ENCODE measurements at regions of chr6 and their contacts with region 1.

Region 1: DNA sequence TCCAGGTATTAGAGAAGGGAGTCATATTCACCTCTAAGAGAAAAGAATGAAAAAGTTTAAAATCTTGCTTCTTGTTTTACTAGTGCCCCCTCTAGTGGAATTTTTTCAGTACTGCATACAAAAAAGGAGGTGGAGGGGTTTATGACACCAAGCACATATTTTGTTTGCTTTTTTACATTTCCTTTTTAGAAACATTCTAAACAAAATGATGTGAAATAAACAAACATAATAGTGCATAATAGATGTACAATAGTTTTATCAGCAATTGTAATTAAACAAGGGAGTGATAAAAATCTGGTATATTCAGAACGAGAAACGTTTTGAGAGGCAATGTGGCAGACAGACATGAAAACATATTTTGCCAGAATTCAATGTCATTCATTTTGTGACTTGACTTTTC is 111.0 kb upstream of the TFAP2D start:
- DNase-seq: peak; percentile 13
- ATAC-seq: no peak
- H3K4me3 ChIP-seq: no peak overlapping the region
- H3K27ac ChIP-seq: no peak overlapping the region
- H3K4me1 ChIP-seq: no peaks in the 10 kb centered on the region
- H3K27me3 ChIP-seq: no peaks in the 10 kb centered on the region
- CTCF ChIP-seq: peak; percentile 76; the same call in 1 of the 2 replicates

Region 2: DNA sequence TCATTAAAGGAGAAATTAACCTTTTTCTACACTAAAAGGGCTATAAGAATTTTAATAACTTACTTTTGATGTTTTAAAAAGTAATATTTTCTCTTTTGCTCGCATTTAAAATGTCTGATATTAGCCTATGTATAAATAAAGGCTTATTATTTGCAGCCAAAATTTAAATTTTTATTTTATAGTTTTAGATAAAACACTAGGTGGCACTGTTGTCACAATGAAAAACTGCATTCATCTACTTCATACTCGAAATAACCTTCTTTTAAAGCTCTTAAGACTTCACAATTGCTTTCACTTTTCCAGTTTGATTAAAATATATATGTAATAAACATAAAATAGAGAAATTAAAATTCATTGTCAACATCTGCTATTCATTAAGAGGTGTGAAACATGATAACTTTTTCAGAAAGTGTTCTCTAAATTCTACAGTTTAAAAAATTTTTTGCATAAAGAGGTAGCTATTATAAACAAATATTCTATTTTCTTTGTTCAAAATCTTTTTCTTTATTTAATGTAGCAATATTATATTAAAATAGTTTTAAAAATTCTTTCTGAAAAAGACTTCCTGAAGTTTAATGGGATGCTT is 473.8 kb before region 1 on chr6:
- CTCF ChIA-PET with region 1: no interaction called
- POLR2A ChIA-PET with region 1: no interaction called
- in situ Hi-C with region 1: no loop called
- intact Hi-C with region 1: loop called (anchors 2 kb)
- DNase-seq: no peak
- ATAC-seq: no peak
- H3K4me3 ChIP-seq: no peak overlapping the region
- H3K27ac ChIP-seq: no peak overlapping the region
- H3K4me1 ChIP-seq: no peaks in the 10 kb centered on the region
- H3K27me3 ChIP-seq: no peaks in the 10 kb centered on the region; the same call in 1 of the 2 replicates
- CTCF ChIP-seq: no peak

Region 3: GRCh38 chr6:50264995-50265571 is 337.2 kb before region 1 on chr6:
- CTCF ChIA-PET with region 1: no interaction called
- POLR2A ChIA-PET with region 1: no interaction called
- in situ Hi-C with region 1: no loop called
- intact Hi-C with region 1: loop called (anchors 1 kb)
- DNase-seq: no peak
- ATAC-seq: no peak
- H3K4me3 ChIP-seq: no peak overlapping the region
- H3K27ac ChIP-seq: no peak overlapping the region
- H3K4me1 ChIP-seq: no peaks in the 10 kb centered on the region
- H3K27me3 ChIP-seq: no peaks in the 10 kb centered on the region
- CTCF ChIP-seq: peak; percentile 59

Region 4: DNA sequence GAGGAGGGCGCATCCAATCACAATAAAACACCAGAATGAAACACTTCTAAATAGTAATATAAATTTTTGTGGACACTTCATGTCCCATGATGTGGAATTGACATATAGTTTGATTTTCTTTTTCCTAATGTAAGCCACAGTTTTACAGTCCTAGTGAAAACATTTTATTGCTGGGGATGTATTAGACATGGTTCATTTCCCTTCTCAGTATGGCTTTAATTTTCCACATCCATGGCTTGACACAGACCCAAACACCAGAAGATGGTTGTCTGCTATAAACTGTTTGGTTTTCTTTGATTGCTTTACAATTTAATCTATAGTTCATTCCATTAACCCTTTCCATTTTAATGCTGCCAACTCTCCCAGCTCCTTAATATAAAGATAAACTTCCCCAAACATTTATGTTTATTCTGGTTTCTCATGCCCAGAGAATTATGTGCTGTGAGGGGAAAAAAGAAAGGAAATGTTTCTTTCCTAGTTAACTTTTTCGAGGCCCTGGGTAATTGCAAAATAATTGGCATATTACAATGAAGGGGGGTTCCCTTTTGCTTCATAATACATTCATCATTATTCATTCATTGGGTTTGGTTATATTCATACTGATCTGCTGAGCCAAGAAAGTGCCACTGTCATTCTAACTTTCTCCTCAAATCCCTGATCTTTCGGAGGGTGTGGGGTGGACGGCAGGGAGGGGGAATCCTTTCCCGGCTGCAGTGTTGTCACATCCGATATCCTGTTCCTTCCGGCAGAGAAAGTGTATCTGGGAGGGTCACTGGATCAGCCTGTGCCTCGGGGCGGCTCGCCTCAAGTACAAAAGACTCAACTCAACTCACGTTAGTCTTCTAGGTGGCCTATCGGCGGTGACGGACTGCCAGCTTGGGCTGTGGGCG is 16.6 kb before region 1 on chr6:
- CTCF ChIA-PET with region 1: no interaction called
- POLR2A ChIA-PET with region 1: no interaction called
- in situ Hi-C with region 1: no loop called
- intact Hi-C with region 1: no loop called
- DNase-seq: no peak
- ATAC-seq: no peak
- H3K4me3 ChIP-seq: no peak overlapping the region
- H3K27ac ChIP-seq: no peak overlapping the region
- H3K4me1 ChIP-seq: no peaks in the 10 kb centered on the region
- H3K27me3 ChIP-seq: no peaks in the 10 kb centered on the region
- CTCF ChIP-seq: no peak

Measured in Panc1 (cell line).